ENCODE measurements at regions of chr5 and their contacts with region 1.

Region 1: DNA sequence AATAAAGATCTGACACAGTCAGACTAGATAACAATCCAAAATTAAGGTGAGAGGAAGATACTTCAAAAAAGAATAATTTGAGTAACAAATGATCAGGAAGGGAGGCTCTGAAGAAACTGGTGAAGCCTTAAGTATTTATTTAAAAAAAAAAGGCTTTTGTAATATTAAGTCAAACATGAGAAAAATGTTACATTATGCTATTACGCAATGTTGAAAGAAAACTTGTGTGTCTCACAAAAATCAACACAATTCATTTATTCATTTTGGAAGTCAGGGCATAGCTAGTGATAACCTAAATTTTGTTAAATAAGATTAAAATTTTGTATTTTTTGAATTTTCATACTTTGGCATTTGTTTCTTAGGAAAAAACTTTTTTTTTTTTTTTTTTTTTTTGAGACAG is 28.2 kb downstream of the WDR41 start:
- DNase-seq: no peak
- ATAC-seq: no peak
- H3K4me3 ChIP-seq: no peak overlapping the region
- H3K27ac ChIP-seq: no peak overlapping the region
- H3K4me1 ChIP-seq: no peaks in the 10 kb centered on the region
- H3K27me3 ChIP-seq: no peaks in the 10 kb centered on the region
- CTCF ChIP-seq: no peak
- EP300 ChIP-seq: no peak
- POLR2A ChIP-seq: no peak
- RAD21 ChIP-seq: no peak

Region 2: DNA sequence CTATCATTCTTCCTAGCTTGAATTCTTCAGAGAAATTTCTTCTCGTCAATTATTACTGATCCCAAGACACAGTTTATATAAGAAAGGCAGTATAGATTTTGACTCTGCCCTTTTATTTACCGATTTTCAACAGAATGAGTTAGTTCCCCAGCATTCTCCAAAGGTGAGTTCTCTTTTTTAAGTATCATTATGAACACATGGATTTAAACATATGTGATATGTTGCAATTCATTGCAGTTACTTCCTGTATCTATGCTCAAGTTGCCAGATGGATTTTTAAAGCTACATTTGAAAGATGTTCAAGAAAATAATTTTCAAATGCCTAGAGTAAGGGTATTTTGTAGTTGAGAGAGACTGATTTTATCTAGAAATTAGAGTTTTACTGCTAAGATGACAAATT is 19.8 kb after region 1 on chr5:
- CTCF ChIA-PET with region 1: interaction called, 4 read pairs
- POLR2A ChIA-PET with region 1: interaction called, 5 read pairs
- RAD21 ChIA-PET with region 1: no interaction called
- SMC1A ChIA-PET with region 1: interaction called, 20 read pairs
- in situ Hi-C with region 1: no loop called
- intact Hi-C with region 1: no loop called
- DNase-seq: no peak
- ATAC-seq: no peak
- H3K4me3 ChIP-seq: no peak overlapping the region
- H3K27ac ChIP-seq: no peak overlapping the region
- H3K4me1 ChIP-seq: no peaks in the 10 kb centered on the region
- H3K27me3 ChIP-seq: no peaks in the 10 kb centered on the region
- CTCF ChIP-seq: no peak
- EP300 ChIP-seq: no peak
- POLR2A ChIP-seq: no peak
- RAD21 ChIP-seq: no peak

Region 3: GRCh38 chr5:77761606-77762005 is 297.7 kb after region 1 on chr5:
- CTCF ChIA-PET with region 1: no interaction called
- POLR2A ChIA-PET with region 1: no interaction called
- RAD21 ChIA-PET with region 1: no interaction called
- SMC1A ChIA-PET with region 1: no interaction called
- in situ Hi-C with region 1: no loop called
- intact Hi-C with region 1: no loop called
- DNase-seq: no peak
- ATAC-seq: no peak
- H3K4me3 ChIP-seq: no peak overlapping the region
- H3K27ac ChIP-seq: no peak overlapping the region
- H3K4me1 ChIP-seq: no peaks in the 10 kb centered on the region
- H3K27me3 ChIP-seq: no peaks in the 10 kb centered on the region
- CTCF ChIP-seq: no peak
- EP300 ChIP-seq: no peak
- POLR2A ChIP-seq: no peak
- RAD21 ChIP-seq: no peak

Measured in GM12878 (cell line).